ENCODE measurements at regions of chr1 and their contacts with region 1.

Region 1: GRCh38 chr1:9629445-9630201 is 21.9 kb upstream of the PIK3CD start:
- DNase-seq: no peak
- H3K4me3 ChIP-seq: no peak overlapping the region
- H3K27ac ChIP-seq: no peak overlapping the region
- H3K4me1 ChIP-seq: no peaks in the 10 kb centered on the region
- H3K27me3 ChIP-seq: no peaks in the 10 kb centered on the region
- CTCF ChIP-seq: no peak
- POLR2A ChIP-seq: no peak

Region 2: GRCh38 chr1:8910914-8911313 is 718.7 kb before region 1 on chr1:
- CTCF ChIA-PET with region 1: no interaction called
- POLR2A ChIA-PET with region 1: no interaction called
- dilution Hi-C with region 1: no loop called
- intact Hi-C with region 1: no loop called
- DNase-seq: no peak
- H3K4me3 ChIP-seq: no peak overlapping the region
- H3K27ac ChIP-seq: no peak overlapping the region
- H3K4me1 ChIP-seq: no peaks in the 10 kb centered on the region
- H3K27me3 ChIP-seq: peaks cover 0 to 4% of the 10 kb centered on the region in 2 experiments
- CTCF ChIP-seq: no peak
- POLR2A ChIP-seq: no peak

Region 3: GRCh38 chr1:9615316-9616063 is 14.1 kb before region 1 on chr1:
- CTCF ChIA-PET with region 1: interaction called, 19 read pairs
- POLR2A ChIA-PET with region 1: no interaction called
- dilution Hi-C with region 1: no loop called
- intact Hi-C with region 1: no loop called
- DNase-seq: peak; percentile 36
- H3K4me3 ChIP-seq: no peak overlapping the region
- H3K27ac ChIP-seq: no peak overlapping the region
- H3K4me1 ChIP-seq: no peaks in the 10 kb centered on the region
- H3K27me3 ChIP-seq: no peaks in the 10 kb centered on the region
- CTCF ChIP-seq: peak; percentile 58 to 80
- POLR2A ChIP-seq: no peak

Region 4: DNA sequence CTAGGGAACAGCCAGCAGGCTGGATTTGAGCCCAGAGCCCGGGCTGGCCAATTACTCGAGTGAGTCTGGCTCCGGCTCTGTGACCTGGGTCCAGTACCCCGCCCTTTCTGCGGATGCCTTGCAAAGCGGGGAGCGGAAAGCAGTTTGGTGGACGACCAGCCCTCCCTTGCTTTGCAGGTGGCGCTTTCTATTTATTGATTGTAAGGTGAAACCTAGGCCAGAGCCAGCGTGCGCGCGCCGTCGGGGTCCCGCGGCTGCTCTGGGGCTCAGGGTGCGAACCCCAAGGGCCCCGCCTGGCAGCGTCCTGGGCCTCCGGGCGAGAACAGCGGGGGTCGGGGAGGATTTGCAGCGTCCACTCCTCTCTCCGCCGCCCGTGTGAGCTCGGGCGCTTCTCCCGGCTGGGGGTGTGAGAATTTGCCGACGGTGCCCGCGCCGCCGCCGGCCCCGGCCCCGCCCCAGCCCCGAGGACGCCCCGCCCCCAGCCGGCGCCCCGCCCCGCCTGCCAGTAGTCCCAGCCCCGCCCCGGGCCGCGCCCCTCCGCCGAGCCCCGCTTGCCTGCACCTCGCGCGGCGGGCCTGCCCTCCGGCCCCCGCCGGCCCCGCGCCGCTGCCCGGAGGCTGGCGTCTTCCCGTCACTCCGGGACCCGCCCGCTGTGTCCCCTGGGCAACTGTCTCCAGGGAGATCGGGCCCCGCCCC is 59.5 kb after region 1 on chr1:
- CTCF ChIA-PET with region 1: interaction called, 4 read pairs
- POLR2A ChIA-PET with region 1: no interaction called
- dilution Hi-C with region 1: no loop called
- intact Hi-C with region 1: loop called (anchors 1 kb)
- DNase-seq: peak; percentile 28
- H3K4me3 ChIP-seq: peak overlapping the region; percentile 44 to 52 (median 49)
- H3K27ac ChIP-seq: no peak overlapping the region
- H3K4me1 ChIP-seq: peaks cover 25% of the 10 kb centered on the region
- H3K27me3 ChIP-seq: peaks cover 4 to 12% of the 10 kb centered on the region in 2 experiments
- CTCF ChIP-seq: no peak
- POLR2A ChIP-seq: no peak

Region 5: GRCh38 chr1:9724706-9725476 is 95.3 kb after region 1 on chr1:
- CTCF ChIA-PET with region 1: interaction called, 6 read pairs
- POLR2A ChIA-PET with region 1: no interaction called
- dilution Hi-C with region 1: no loop called
- intact Hi-C with region 1: loop called (anchors 1 kb)
- DNase-seq: peak; percentile 41
- H3K4me3 ChIP-seq: no peak overlapping the region
- H3K27ac ChIP-seq: no peak overlapping the region
- H3K4me1 ChIP-seq: no peaks in the 10 kb centered on the region
- H3K27me3 ChIP-seq: no peaks in the 10 kb centered on the region
- CTCF ChIP-seq: peak; percentile 75 to 92
- POLR2A ChIP-seq: no peak

Region 6: GRCh38 chr1:9861360-9861759 is 231.7 kb after region 1 on chr1:
- CTCF ChIA-PET with region 1: interaction called, 14 read pairs
- POLR2A ChIA-PET with region 1: no interaction called
- dilution Hi-C with region 1: no loop called
- intact Hi-C with region 1: no loop called
- DNase-seq: no peak
- H3K4me3 ChIP-seq: no peak overlapping the region
- H3K27ac ChIP-seq: no peak overlapping the region
- H3K4me1 ChIP-seq: peaks cover 15% of the 10 kb centered on the region
- H3K27me3 ChIP-seq: no peaks in the 10 kb centered on the region
- CTCF ChIP-seq: no peak
- POLR2A ChIP-seq: no peak

Region 7: DNA sequence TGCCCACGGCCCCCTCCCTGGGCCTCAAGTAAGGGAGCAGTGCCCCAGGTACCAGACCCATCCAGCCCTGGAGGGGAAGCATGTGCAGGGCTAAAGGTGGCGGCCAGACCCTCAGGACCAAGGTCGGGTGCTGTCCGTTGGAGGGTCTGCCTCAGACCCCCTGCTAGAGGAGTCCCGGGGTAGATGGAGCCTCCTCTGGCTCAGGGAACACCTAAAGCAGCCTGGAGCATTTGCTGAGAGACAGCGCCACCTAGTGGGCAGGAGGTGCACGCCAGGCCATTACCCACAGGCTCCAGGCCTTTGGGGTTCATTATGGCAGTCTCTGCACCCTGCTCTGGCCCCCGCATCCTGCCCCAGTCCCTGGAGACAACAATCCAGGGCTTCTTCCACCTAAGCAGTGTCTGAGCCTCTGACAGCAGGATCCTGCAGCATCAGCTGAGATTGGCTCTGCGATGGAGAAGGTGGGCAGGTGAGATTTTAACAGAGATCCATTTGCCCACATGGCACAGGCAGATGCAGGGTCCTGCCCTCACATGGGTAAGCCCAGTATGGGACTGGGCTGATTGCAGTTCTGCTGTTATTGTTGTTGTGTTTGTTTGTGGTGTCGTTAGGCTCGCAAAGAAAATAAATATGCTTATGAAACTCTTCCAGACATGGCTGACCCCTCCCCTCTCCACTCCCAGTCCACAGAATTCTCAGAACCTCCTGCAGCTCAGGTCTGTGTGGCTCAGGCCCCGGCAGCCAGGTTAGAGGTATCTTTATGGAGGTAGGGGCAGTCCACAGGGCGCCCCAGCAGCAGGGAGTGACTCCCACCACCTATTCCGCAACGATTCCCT is 238.0 kb after region 1 on chr1:
- CTCF ChIA-PET with region 1: interaction called, 14 read pairs
- POLR2A ChIA-PET with region 1: no interaction called
- dilution Hi-C with region 1: no loop called
- intact Hi-C with region 1: loop called (anchors 1 kb)
- DNase-seq: peak; percentile 62
- H3K4me3 ChIP-seq: no peak overlapping the region
- H3K27ac ChIP-seq: no peak overlapping the region
- H3K4me1 ChIP-seq: peaks cover 15% of the 10 kb centered on the region
- H3K27me3 ChIP-seq: no peaks in the 10 kb centered on the region
- CTCF ChIP-seq: peak; percentile 96 to 97
- POLR2A ChIP-seq: no peak

Measured in endothelial cell of umbilical vein (primary cell).